ENCODE measurements at regions of chr2 and their contacts with region 1.

Region 1: DNA sequence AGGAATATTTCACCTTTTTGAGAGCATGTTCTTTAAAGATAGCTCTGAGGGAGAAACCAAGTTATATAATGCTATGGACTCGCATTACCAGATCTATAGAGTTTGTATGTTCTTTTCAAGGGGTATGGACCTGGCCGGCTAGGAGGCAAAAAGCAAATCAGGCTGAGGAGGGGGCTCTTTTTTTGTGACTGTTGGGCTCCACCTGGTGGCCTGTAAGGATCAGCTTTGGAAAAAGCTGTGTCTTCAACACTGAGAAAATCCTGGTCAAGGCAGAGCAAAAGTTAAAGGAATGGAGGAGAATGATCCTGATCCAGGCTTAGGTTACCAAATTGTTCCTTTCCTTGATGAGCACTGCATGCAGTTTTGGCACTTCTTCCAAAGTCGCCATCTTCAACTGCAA is 180.5 kb downstream of the DIS3L2 start:
- DNase-seq: peak in 4 of 9 experiments; percentile 11 to 47 (median 26)
- ATAC-seq: no peak
- H3K4me3 ChIP-seq: no peak overlapping the region
- H3K4me3 Mint-ChIP-seq: no peak overlapping the region
- H3K27ac ChIP-seq: no peak overlapping the region
- H3K27ac Mint-ChIP-seq: no peak overlapping the region
- H3K4me1 ChIP-seq: peaks cover 34% of the 10 kb centered on the region
- H3K4me1 Mint-ChIP-seq: peaks cover 45% of the 10 kb centered on the region
- H3K27me3 ChIP-seq: no peaks in the 10 kb centered on the region
- H3K27me3 Mint-ChIP-seq: no peaks in the 10 kb centered on the region
- CTCF ChIP-seq: peak; percentile 65

Region 2: GRCh38 chr2:231666171-231667095 is 475.6 kb before region 1 on chr2:
- CTCF ChIA-PET with region 1: no interaction called
- POLR2A ChIA-PET with region 1: no interaction called
- intact Hi-C with region 1: no loop called
- DNase-seq: peak in 1 of 9 experiments; percentile 46
- ATAC-seq: no peak
- H3K4me3 ChIP-seq: no peak overlapping the region
- H3K4me3 Mint-ChIP-seq: no peak overlapping the region
- H3K27ac ChIP-seq: peak overlapping the region in 1 of 2 experiments; percentile 36
- H3K27ac Mint-ChIP-seq: no peak overlapping the region
- H3K4me1 ChIP-seq: peaks cover 14% of the 10 kb centered on the region
- H3K4me1 Mint-ChIP-seq: peaks cover 12% of the 10 kb centered on the region
- H3K27me3 ChIP-seq: no peaks in the 10 kb centered on the region
- H3K27me3 Mint-ChIP-seq: no peaks in the 10 kb centered on the region
- CTCF ChIP-seq: no peak

Region 3: GRCh38 chr2:231900486-231900942 is 241.5 kb before region 1 on chr2:
- CTCF ChIA-PET with region 1: interaction called, 15 read pairs
- POLR2A ChIA-PET with region 1: no interaction called
- intact Hi-C with region 1: loop called in 1 of 2 experiments (anchors 5 kb)
- DNase-seq: peak; percentile 19 to 60 (median 41)
- ATAC-seq: peak; percentile 26
- H3K4me3 ChIP-seq: no peak overlapping the region
- H3K4me3 Mint-ChIP-seq: no peak overlapping the region
- H3K27ac ChIP-seq: no peak overlapping the region
- H3K27ac Mint-ChIP-seq: no peak overlapping the region
- H3K4me1 ChIP-seq: no peaks in the 10 kb centered on the region
- H3K4me1 Mint-ChIP-seq: no peaks in the 10 kb centered on the region
- H3K27me3 ChIP-seq: no peaks in the 10 kb centered on the region
- H3K27me3 Mint-ChIP-seq: no peaks in the 10 kb centered on the region
- CTCF ChIP-seq: peak; percentile 75

Region 4: DNA sequence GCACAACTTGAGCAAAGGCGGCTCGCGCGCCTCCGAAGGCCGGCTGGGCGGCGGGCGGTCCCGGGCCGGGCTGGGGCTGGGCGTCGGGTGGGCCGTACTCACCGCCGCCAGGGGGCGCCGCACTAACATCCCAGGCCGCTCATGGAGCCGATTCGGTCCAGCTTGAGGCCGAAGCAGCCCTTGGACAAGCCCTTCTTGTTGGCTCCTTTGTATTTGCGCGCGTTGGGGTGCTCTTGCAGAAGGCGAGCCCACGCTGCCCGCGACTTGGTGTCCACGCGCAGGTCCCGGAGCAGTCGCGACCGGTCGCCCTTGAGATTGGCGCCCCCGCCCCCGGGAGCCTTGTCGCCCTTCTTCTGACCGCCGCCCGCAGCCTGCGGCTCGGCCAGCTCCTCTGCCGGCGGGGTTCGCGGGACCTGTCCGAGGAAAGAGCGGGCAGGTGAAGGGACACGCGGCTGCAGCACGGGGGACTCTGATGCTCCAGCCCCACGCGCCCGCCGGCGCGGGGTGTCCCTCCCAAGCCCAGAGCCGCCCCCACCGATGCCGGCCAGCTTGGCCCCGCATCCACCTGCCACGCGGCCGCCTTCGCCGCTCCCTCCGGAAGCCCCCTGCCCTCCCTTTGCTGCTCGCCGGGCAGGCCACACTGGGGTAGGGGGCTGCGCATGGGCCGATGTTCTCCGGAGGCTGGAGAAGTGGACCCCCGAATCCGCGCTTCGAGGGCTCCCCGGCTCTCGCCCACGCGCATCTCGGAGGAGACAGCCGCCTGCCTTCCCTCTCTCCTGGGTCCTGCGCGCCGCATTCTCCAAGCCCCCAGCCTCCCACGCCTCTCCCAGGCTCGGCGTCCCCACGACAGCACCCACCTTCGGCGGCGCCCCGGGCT is 216.5 kb before region 1 on chr2:
- CTCF ChIA-PET with region 1: interaction called, 76 read pairs
- POLR2A ChIA-PET with region 1: interaction called, 3 read pairs
- intact Hi-C with region 1: loop called (anchors 1 kb)
- DNase-seq: peak; percentile 46 to 85 (median 68)
- ATAC-seq: peak; percentile 62
- H3K4me3 ChIP-seq: peak overlapping the region; percentile 35 to 66
- H3K4me3 Mint-ChIP-seq: peak overlapping the region; percentile 76
- H3K27ac ChIP-seq: no peak overlapping the region
- H3K27ac Mint-ChIP-seq: no peak overlapping the region
- H3K4me1 ChIP-seq: peaks cover 16% of the 10 kb centered on the region
- H3K4me1 Mint-ChIP-seq: peaks cover 11% of the 10 kb centered on the region
- H3K27me3 ChIP-seq: peaks cover 7 to 11% of the 10 kb centered on the region in 2 experiments
- H3K27me3 Mint-ChIP-seq: peaks cover 33% of the 10 kb centered on the region
- CTCF ChIP-seq: peak; percentile 73

Region 5: GRCh38 chr2:232126301-232127099 is 15.5 kb before region 1 on chr2:
- CTCF ChIA-PET with region 1: interaction called, 11 read pairs
- POLR2A ChIA-PET with region 1: no interaction called
- intact Hi-C with region 1: no loop called
- DNase-seq: no peak
- ATAC-seq: no peak
- H3K4me3 ChIP-seq: no peak overlapping the region
- H3K4me3 Mint-ChIP-seq: no peak overlapping the region
- H3K27ac ChIP-seq: no peak overlapping the region
- H3K27ac Mint-ChIP-seq: no peak overlapping the region
- H3K4me1 ChIP-seq: peaks cover 6% of the 10 kb centered on the region
- H3K4me1 Mint-ChIP-seq: peaks cover 28% of the 10 kb centered on the region
- H3K27me3 ChIP-seq: no peaks in the 10 kb centered on the region
- H3K27me3 Mint-ChIP-seq: no peaks in the 10 kb centered on the region
- CTCF ChIP-seq: no peak